ENCODE measurements at regions of chr11 and their contacts with region 1.

Region 1: DNA sequence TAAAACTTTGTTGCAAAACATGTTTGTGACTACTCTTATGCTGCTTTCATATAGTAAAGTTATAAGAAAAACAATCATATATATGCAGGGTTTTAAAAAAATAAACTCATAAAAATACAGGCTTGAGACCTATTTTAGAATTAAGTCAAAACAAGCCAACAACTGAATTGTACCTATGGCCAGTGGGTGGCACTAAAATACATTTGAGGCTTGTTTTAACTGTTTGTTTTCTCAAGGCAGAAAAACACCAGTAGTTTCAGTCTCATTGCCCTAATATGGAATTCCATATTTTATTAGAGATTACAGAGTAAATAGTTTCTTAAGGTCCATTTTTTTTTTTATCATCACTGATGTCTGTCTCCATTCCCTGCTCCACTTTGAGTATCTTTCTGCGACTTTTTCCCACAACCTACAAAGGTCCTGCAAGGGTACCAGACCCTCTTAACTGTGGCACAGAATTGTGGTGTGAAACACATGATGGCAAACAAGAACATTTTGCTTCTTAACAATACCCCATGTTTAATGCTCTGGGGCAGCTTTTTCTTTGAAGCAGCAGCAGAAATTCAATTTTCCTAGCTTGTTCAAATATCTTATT is 8.5 kb upstream of the CCDC89 start:
- DNase-seq: peak in 2 of 5 donors; percentile 28 to 44
- H3K4me3 ChIP-seq: no peak overlapping the region
- H3K4me3 Mint-ChIP-seq: no peak overlapping the region
- H3K27ac ChIP-seq: no peak overlapping the region
- H3K27ac Mint-ChIP-seq: peak overlapping the region in 1 of 8 donors; percentile 54
- H3K4me1 ChIP-seq: peaks cover 7% of the 10 kb centered on the region
- H3K4me1 Mint-ChIP-seq: peaks cover 7 to 35% (median 23%) of the 10 kb centered on the region in 3 donors
- H3K27me3 ChIP-seq: no peaks in the 10 kb centered on the region
- H3K27me3 Mint-ChIP-seq: no peaks in the 10 kb centered on the region

Region 2: DNA sequence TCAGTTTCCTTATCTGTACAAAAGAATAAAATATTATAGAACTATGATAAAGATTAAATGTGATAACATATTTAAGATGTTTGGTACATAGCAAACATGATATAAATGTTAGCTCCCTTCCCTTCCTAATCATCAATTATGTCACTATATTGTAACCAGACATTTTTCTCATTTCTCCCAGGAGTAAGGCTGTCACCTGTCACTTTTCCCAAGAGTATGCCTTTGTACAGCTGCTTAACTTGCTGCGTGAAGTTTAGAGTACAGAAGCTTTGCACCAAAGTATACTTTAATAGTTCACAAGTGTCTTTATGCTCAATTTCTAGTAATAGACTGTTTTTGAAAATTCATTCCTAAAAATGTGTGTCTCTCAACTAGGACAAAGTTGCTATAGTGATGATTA is 254.2 kb before region 1 on chr11:
- CTCF ChIA-PET with region 1: no interaction called
- POLR2A ChIA-PET with region 1: no interaction called
- DNase-seq: no peak
- H3K4me3 ChIP-seq: no peak overlapping the region
- H3K4me3 Mint-ChIP-seq: no peak overlapping the region
- H3K27ac ChIP-seq: no peak overlapping the region
- H3K27ac Mint-ChIP-seq: no peak overlapping the region
- H3K4me1 ChIP-seq: no peaks in the 10 kb centered on the region
- H3K4me1 Mint-ChIP-seq: no peaks in the 10 kb centered on the region
- H3K27me3 ChIP-seq: no peaks in the 10 kb centered on the region
- H3K27me3 Mint-ChIP-seq: no peaks in the 10 kb centered on the region

Region 3: GRCh38 chr11:85634747-85635146 is 59.7 kb before region 1 on chr11:
- CTCF ChIA-PET with region 1: no interaction called
- POLR2A ChIA-PET with region 1: no interaction called
- DNase-seq: no peak
- H3K4me3 ChIP-seq: no peak overlapping the region
- H3K4me3 Mint-ChIP-seq: no peak overlapping the region
- H3K27ac ChIP-seq: no peak overlapping the region
- H3K27ac Mint-ChIP-seq: no peak overlapping the region
- H3K4me1 ChIP-seq: peaks cover 6% of the 10 kb centered on the region
- H3K4me1 Mint-ChIP-seq: peaks cover 10 to 19% (median 17%) of the 10 kb centered on the region in 3 donors
- H3K27me3 ChIP-seq: no peaks in the 10 kb centered on the region
- H3K27me3 Mint-ChIP-seq: no peaks in the 10 kb centered on the region

Region 4: DNA sequence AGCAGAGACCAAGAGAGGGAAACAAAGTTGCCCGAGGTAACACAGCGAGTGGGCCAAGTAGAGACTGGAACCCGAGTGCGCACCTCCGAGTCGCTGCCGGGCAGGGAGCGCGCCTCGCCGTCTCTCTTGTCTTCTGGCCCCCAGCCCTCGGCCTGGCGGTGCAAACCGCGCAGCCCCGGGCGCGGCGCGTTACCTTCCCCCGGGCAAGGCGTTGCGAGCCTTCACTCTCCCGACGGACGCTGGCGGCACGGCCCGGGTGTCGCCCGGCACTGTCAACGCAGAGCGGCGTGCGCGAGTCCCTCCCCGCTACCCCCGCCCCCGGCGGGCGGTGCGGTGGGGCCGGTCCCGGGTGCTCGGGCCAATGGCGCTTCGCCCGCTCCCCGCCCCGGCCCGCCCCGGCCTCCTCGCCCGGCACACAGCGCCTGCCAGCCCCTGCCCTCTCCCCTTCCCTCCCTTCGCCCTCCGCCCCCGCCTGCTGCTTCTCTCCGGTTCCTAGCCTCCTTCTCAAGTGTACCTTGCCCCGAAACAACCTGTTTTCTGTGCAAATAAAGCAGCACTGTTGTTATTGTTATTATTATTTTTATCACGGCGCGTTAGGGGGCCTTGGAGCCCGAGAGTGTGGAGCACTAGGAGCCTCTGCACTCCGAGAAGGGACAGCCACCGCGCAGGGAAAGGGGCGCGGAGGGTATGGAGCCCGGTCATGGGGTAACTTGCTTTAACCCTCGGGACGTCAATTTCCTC is 116.6 kb after region 1 on chr11 and contains the start of gene SYTL2:
- CTCF ChIA-PET with region 1: interaction called, 11 read pairs
- POLR2A ChIA-PET with region 1: no interaction called
- DNase-seq: peak; percentile 73 to 83 (median 78)
- H3K4me3 ChIP-seq: peak within 1 kb of the TSS; percentile 77
- H3K4me3 Mint-ChIP-seq: peak within 1 kb of the TSS; percentile 93 to 97 (median 94)
- H3K27ac ChIP-seq: peak within 1 kb of the TSS; percentile 51
- H3K27ac Mint-ChIP-seq: peak within 1 kb of the TSS; percentile 86 to 98 (median 96)
- H3K4me1 ChIP-seq: peaks cover 26% of the 10 kb centered on the region
- H3K4me1 Mint-ChIP-seq: peaks cover 47 to 64% (median 62%) of the 10 kb centered on the region in 3 donors
- H3K27me3 ChIP-seq: no peaks in the 10 kb centered on the region
- H3K27me3 Mint-ChIP-seq: peaks cover 0 to 1% of the 10 kb centered on the region in 2 donors
- total RNA-seq, gene SYTL2: 12.4 to 13.2 TPM